ENCODE measurements at regions of chr3 and their contacts with region 1.

Region 1: DNA sequence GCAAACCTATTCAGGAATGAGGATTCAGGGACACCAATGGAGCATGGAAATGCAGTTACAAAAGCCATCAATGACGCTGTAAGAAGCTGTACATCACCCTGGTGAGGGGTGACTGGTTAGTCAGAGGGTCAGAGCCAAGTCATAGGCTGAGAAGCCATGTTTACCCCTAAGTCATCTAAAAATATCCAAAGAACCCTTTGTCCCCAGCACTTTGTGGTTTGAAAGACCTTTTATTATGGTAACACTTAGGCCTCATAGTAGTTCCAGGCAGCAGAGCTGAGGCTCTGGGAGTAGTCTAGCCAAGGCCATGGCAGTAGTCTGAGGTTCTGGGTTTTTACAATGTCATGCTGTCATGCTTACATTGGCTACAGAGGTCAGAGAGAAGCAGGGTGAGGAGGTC is 131.2 kb downstream of the CTNNB1 start:
- DNase-seq: no peak
- H3K4me3 ChIP-seq: no peak overlapping the region
- H3K27ac ChIP-seq: no peak overlapping the region
- H3K4me1 ChIP-seq: no peaks in the 10 kb centered on the region
- H3K27me3 ChIP-seq: no peaks in the 10 kb centered on the region
- CTCF ChIP-seq: no peak
- EP300 ChIP-seq: no peak
- POLR2A ChIP-seq: no peak

Region 2: GRCh38 chr3:40505599-40506462 is 824.6 kb before region 1 on chr3 and contains the start of gene ZNF620:
- in situ Hi-C with region 1: no loop called
- intact Hi-C with region 1: no loop called
- DNase-seq: peak; percentile 83
- H3K4me3 ChIP-seq: peak within 1 kb of the TSS; percentile 55 to 77 (median 67)
- H3K27ac ChIP-seq: peak within 1 kb of the TSS; percentile 77 to 86 (median 83)
- H3K4me1 ChIP-seq: peaks cover 0 to 16% (median 13%) of the 10 kb centered on the region in 4 donors
- H3K27me3 ChIP-seq: no peaks in the 10 kb centered on the region
- CTCF ChIP-seq: peak in 3 of 5 experiments; percentile 15 to 35 (median 29)
- EP300 ChIP-seq: no peak
- POLR2A ChIP-seq: peak; percentile 66
- total RNA-seq, gene ZNF620: 2.6 to 8.0 (median 4.3) TPM in 3 of 4 donors, not detected in the other

Region 3: DNA sequence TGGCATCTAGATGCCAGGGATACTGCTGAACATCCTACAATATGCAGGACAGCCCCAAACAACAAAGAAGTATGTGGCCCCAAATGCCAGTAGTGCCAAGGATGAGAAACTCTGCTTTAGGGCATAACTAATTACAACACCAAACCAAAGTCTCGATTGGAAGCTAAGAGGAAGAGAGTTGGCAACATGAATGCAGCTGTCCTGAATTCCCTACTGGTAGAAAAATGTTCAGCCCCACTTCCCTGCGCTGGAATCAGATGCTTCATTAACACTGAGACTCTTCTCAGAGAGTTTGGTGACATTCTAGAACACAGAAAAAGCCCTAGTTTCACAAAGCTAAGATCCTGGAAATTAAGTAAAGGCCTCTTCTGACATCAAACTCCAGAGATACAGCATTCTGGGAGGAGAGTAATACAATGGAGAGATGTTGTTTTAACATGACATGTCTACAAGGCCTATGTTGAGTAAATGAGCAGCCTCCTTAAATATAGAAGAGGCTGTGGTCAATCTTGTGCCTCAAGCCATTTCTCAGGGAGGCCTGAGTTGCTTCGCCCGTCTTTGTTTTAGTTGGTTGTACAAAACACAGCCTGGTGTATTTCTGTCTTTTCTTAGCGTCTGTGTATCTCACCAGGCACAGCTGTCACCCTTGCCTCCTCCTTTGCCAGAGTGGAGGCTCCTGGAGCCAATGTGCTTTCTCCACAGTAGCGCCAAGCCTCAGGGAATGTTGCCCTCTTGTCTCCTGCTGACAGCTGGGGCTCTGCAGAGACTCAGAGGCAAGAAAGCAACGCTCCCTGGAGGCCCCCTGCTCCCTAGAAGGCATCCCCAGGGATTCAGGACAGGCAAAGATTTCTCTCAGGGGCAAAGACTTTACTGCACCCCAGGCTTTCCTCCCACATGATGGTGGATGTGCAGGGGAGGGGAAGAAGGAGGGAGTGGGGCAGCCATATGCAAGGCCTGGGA is 156.3 kb before region 1 on chr3:
- in situ Hi-C with region 1: no loop called
- intact Hi-C with region 1: no loop called
- DNase-seq: no peak
- H3K4me3 ChIP-seq: no peak overlapping the region
- H3K27ac ChIP-seq: peak overlapping the region in 2 of 4 donors; percentile 13 to 17
- H3K4me1 ChIP-seq: peaks cover 0 to 11% (median 9%) of the 10 kb centered on the region in 4 donors
- H3K27me3 ChIP-seq: no peaks in the 10 kb centered on the region
- CTCF ChIP-seq: no peak
- EP300 ChIP-seq: no peak
- POLR2A ChIP-seq: no peak

Region 4: GRCh38 chr3:41190509-41191284 is 139.8 kb before region 1 on chr3:
- in situ Hi-C with region 1: no loop called
- intact Hi-C with region 1: no loop called
- DNase-seq: no peak
- H3K4me3 ChIP-seq: no peak overlapping the region
- H3K27ac ChIP-seq: no peak overlapping the region
- H3K4me1 ChIP-seq: no peaks in the 10 kb centered on the region
- H3K27me3 ChIP-seq: no peaks in the 10 kb centered on the region
- CTCF ChIP-seq: no peak
- EP300 ChIP-seq: no peak
- POLR2A ChIP-seq: no peak

Region 5: GRCh38 chr3:41742127-41742526 is 411.7 kb after region 1 on chr3:
- in situ Hi-C with region 1: no loop called
- intact Hi-C with region 1: loop called (anchors 5 kb)
- DNase-seq: no peak
- H3K4me3 ChIP-seq: no peak overlapping the region
- H3K27ac ChIP-seq: no peak overlapping the region
- H3K4me1 ChIP-seq: no peaks in the 10 kb centered on the region
- H3K27me3 ChIP-seq: no peaks in the 10 kb centered on the region
- CTCF ChIP-seq: no peak
- EP300 ChIP-seq: no peak
- POLR2A ChIP-seq: no peak

Measured in transverse colon (tissue), 4 donors.